H1 (cell line): ENCODE measurements at regions of chr3 and their contacts with region 1.

Region 1: DNA sequence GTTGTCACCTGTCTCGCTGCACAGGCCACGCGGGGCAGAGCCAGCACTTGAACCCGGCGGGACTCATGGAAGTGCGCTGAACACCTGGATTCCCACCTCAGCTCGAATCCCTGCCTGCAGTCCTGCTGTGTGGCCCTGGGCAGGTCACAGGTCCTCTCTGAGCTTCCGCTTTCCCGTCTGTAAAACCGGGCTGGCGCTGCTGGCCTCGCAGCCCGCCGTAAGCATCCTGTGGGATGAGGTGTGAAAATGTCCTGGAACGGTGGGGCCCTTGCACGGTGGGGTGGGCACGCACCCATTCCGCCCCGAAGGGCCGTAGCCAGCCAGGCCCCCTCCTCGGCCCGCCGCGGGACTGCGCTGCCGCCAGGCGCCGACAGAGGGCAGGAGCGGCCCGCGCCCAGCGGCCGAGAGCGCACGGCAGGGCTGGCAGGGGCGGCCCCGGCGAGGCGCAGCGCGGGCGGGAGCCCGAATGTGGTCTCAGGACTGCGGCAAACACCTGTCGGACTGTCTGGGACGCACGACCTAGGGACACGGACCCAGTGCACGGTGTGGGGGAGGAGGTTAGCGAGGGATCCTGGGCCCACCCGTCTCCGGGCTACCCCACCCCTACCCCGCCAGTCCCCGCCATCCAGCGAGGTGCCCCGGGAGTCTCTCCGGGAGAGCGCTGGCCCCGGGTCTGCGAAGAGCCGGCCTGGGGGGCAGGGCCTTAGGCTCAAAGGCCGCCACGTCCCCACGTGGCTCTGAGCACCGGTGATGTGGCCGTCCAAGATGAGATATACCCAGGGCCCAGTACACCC is 40.4 kb downstream of the DNAJB8 start:
- DNase-seq: peak in 1 of 2 experiments; percentile 90
- H3K4me3 ChIP-seq: peak overlapping the region in 2 of 4 experiments; percentile 10 to 48; a peak in 4 of 8 replicates
- H3K27ac ChIP-seq: no peak overlapping the region
- H3K4me1 ChIP-seq: peaks cover 0 to 23% (median 11%) of the 10 kb centered on the region in 4 experiments; a peak in 5 of 7 replicates
- H3K27me3 ChIP-seq: peaks cover 6 to 64% (median 52%) of the 10 kb centered on the region in 4 experiments
- CTCF ChIP-seq: peak in 2 of 3 experiments; percentile 96 to 97; a peak in 3 of 4 replicates
- EP300 ChIP-seq: no peak
- POLR2A ChIP-seq: no peak
- RAD21 ChIP-seq: peak; percentile 76 to 96

Region 2: GRCh38 chr3:128408693-128409623 is 17.4 kb before region 1 on chr3:
- CTCF ChIA-PET with region 1: interaction called, 21 read pairs
- POLR2A ChIA-PET with region 1: interaction called, 4 read pairs
- DNase-seq: no peak
- H3K4me3 ChIP-seq: no peak overlapping the region
- H3K27ac ChIP-seq: no peak overlapping the region
- H3K4me1 ChIP-seq: peaks cover 0 to 24% (median 19%) of the 10 kb centered on the region in 4 experiments; a peak in 6 of 7 replicates
- H3K27me3 ChIP-seq: no peaks in the 10 kb centered on the region
- CTCF ChIP-seq: peak in 2 of 3 experiments; percentile 45 to 66; a peak in 3 of 4 replicates
- EP300 ChIP-seq: no peak
- POLR2A ChIP-seq: no peak
- RAD21 ChIP-seq: peak; percentile 45 to 58

Region 3: DNA sequence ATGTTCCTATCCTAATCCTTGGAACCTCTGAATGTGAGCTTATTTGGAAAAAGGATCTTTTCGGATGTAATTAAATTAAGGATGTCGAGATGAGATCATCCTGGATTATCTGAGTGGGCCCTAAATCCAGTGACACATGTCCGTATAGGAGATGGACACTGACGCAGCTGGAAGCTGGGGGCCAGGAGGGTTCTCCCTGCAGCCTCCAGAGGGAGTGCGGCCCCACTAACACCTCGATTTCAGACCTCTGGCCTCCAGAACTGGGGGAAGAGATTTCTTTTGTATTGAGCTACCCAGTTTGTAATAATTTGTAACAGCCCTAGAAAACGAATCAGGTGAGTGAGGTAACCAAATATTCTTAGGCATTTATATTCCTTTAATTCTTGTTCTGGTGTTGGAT is 37.9 kb after region 1 on chr3:
- CTCF ChIA-PET with region 1: interaction called, 17 read pairs
- POLR2A ChIA-PET with region 1: interaction called, 4 read pairs
- DNase-seq: no peak
- H3K4me3 ChIP-seq: no peak overlapping the region
- H3K27ac ChIP-seq: no peak overlapping the region
- H3K4me1 ChIP-seq: peaks cover 0 to 2% (median 0%) of the 10 kb centered on the region in 4 experiments; a peak in 2 of 7 replicates
- H3K27me3 ChIP-seq: peaks cover 0 to 13% (median 11%) of the 10 kb centered on the region in 4 experiments; a peak in 3 of 7 replicates
- CTCF ChIP-seq: peak in 2 of 3 experiments; percentile 29 to 35; a peak in 1 of 4 replicates
- EP300 ChIP-seq: no peak
- POLR2A ChIP-seq: no peak
- RAD21 ChIP-seq: peak; percentile 21 to 45; a peak in 2 of 4 replicates

Region 4: DNA sequence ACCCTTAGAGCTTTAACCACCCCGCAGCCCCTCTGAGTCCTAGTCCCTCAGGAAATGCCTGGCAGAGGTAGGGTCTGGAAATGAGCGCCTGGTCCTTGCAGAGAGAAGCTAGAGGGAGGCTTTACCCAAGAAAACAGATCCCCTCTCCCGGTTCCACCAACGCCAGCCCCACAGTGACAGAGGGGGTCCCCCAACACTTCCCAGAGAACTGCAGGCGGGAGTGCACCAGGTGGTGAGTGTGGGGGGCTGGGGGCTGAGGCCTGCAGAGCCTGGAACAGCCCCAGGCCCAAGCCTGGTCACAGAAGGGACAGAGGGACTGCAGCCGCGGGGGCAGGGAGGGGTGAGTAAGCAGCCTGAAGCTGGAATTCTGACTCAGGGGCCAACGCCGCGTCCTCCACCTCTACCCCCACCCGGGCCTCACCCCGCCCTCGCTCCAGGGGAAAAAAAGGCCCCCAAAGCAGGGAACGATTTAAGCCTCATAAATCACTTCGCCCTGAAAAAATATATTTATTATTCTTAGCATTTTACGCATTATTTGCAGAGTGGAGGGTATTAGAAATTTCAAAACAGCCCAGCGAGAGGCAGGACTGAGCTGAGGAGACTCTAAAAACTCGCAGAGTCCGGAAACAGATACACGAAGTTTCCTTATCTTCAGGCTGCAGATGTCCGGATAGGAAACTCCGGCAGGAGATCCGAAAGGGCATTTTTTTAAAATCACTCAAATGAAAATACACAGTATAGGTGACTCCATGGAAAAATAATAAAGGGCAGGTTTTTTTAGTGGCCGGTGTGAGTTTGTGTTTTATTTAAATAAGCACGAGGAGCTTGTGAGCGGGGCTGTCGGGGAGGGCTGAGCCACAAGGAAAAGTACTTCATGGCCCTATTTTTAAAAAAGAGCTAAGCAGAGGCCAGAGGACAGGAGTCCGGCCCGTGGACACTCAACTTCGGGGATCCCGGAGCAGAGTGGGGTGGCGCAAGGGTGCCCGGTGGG is 56.6 kb after region 1 on chr3:
- CTCF ChIA-PET with region 1: interaction called, 38 read pairs
- POLR2A ChIA-PET with region 1: interaction called, 3 read pairs
- DNase-seq: no peak
- H3K4me3 ChIP-seq: peak overlapping the region in 3 of 4 experiments; percentile 27 to 48 (median 40); a peak in 5 of 8 replicates
- H3K27ac ChIP-seq: no peak overlapping the region
- H3K4me1 ChIP-seq: peaks cover 8 to 66% (median 50%) of the 10 kb centered on the region in 4 experiments
- H3K27me3 ChIP-seq: peaks cover 85 to 100% (median 98%) of the 10 kb centered on the region in 4 experiments
- CTCF ChIP-seq: no peak
- EP300 ChIP-seq: no peak
- POLR2A ChIP-seq: no peak
- RAD21 ChIP-seq: no peak

Region 5: GRCh38 chr3:128497387-128498126 is 71.2 kb after region 1 on chr3:
- CTCF ChIA-PET with region 1: interaction called, 83 read pairs
- POLR2A ChIA-PET with region 1: no interaction called
- DNase-seq: peak in 1 of 2 experiments; percentile 97
- H3K4me3 ChIP-seq: peak overlapping the region; percentile 34 to 59 (median 46)
- H3K27ac ChIP-seq: no peak overlapping the region
- H3K4me1 ChIP-seq: peaks cover 0 to 33% (median 18%) of the 10 kb centered on the region in 4 experiments; a peak in 6 of 7 replicates
- H3K27me3 ChIP-seq: peaks cover 50 to 66% (median 65%) of the 10 kb centered on the region in 4 experiments
- CTCF ChIP-seq: peak in 2 of 3 experiments; percentile 63 to 85; a peak in 3 of 4 replicates
- EP300 ChIP-seq: no peak
- POLR2A ChIP-seq: no peak
- RAD21 ChIP-seq: peak; percentile 74 to 86

Region 6: DNA sequence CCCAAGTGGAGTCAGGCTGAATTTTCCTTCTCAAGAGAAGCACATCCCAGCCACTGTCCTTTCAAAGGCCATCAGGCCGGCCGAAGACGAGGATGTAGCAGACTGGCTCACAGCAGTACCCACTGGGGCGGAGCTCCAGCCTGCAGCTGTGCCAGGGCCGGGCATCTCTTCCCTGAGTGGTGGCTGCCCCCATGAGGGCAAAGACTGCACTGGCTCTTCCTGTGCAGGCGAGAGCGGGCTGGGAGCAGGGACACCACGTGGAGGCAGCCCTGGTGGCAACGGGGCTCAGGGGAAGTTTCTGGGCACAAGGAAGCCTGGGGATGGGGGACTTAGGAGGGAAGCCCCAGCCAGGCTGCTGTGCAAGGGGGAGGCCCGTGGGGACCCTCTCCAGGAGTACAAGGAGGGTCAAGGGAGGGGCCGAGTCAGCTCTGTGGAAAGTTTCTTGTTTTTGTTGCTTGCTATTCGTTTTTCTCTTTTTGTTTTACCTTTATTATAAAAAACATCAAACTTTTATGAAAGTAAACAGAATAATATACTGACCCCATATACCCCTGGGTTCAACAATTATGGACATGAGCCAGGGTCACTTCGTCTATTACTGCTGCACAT is 158.2 kb after region 1 on chr3:
- CTCF ChIA-PET with region 1: interaction called, 13 read pairs
- POLR2A ChIA-PET with region 1: no interaction called
- DNase-seq: peak in 1 of 2 experiments; percentile 80
- H3K4me3 ChIP-seq: no peak overlapping the region
- H3K27ac ChIP-seq: no peak overlapping the region
- H3K4me1 ChIP-seq: peaks cover 0 to 3% (median 2%) of the 10 kb centered on the region in 4 experiments; a peak in 4 of 7 replicates
- H3K27me3 ChIP-seq: peaks cover 0 to 7% (median 5%) of the 10 kb centered on the region in 4 experiments; a peak in 3 of 7 replicates
- CTCF ChIP-seq: peak in 2 of 3 experiments; percentile 95 to 97; a peak in 3 of 4 replicates
- EP300 ChIP-seq: 0 out of 3 replicates have a peak, but pooled peaks of 1 of the 2 experiments have one; percentile 7
- POLR2A ChIP-seq: no peak
- RAD21 ChIP-seq: peak; percentile 98 to 100

Region 7: DNA sequence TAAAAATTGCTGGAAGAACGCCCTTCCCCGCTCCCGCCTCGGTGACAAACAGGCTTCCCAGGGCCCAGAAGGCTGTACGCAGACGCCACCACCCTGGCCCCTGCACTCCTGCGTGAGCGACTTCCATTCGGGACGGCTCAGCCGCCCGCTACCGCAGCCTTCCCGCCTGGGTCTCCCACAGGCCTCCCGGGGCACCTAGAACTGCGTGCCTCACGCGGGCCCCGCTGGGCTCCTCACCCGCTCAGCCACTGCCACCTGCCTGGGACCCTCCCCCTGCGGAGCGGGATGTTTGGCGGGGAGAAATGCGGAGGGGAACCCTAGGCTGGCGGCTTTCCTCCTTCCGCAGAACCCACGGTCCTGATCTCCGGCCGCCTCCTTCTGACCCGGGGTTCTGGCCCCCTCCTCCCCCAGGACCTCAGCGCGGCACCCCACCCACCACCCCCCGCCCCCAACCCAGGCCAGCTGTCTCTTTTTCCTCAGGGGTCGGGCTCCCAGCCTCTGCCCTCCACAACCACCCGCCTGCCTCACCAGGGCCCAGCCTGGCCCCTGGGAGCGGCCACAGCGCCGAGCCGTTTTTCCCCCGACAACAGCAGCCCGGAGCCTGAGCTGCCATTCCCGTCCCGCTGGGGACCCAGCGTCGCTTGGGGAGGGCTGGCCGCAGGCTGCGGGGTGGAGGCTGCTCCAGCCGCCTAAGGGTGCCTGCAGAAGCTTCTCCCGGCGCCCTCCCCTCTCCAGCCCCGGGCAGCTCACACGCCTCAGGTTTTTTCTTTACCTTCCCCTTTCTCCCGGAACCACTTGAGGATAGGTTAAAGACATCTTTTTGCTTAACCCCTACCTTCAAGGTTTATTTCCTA is 272.1 kb after region 1 on chr3:
- CTCF ChIA-PET with region 1: no interaction called
- POLR2A ChIA-PET with region 1: no interaction called
- DNase-seq: peak in 1 of 2 experiments; percentile 77
- H3K4me3 ChIP-seq: peak overlapping the region; percentile 31 to 80 (median 62)
- H3K27ac ChIP-seq: no peak overlapping the region
- H3K4me1 ChIP-seq: no peaks in the 10 kb centered on the region; a peak in 1 of 7 replicates
- H3K27me3 ChIP-seq: peaks cover 0 to 6% (median 3%) of the 10 kb centered on the region in 4 experiments; a peak in 2 of 7 replicates
- CTCF ChIP-seq: 0 out of 4 replicates have a peak, but pooled peaks of 1 of the 3 experiments have one; percentile 1
- EP300 ChIP-seq: no peak
- POLR2A ChIP-seq: peak in 1 of 2 experiments; percentile 52; a peak in 1 of 3 replicates
- RAD21 ChIP-seq: no peak